Heart right ventricle (tissue), 16 donors: ENCODE measurements at regions of chr2 and their contacts with region 1.

Region 1: GRCh38 chr2:225270861-225271260 is 128.6 kb upstream of the NYAP2 start:
- DNase-seq: no peak
- ATAC-seq: no peak
- H3K4me3 ChIP-seq: no peak overlapping the region
- H3K27ac ChIP-seq: no peak overlapping the region
- H3K4me1 ChIP-seq: no peaks in the 10 kb centered on the region
- H3K27me3 ChIP-seq: no peaks in the 10 kb centered on the region
- CTCF ChIP-seq: no peak

Region 2: DNA sequence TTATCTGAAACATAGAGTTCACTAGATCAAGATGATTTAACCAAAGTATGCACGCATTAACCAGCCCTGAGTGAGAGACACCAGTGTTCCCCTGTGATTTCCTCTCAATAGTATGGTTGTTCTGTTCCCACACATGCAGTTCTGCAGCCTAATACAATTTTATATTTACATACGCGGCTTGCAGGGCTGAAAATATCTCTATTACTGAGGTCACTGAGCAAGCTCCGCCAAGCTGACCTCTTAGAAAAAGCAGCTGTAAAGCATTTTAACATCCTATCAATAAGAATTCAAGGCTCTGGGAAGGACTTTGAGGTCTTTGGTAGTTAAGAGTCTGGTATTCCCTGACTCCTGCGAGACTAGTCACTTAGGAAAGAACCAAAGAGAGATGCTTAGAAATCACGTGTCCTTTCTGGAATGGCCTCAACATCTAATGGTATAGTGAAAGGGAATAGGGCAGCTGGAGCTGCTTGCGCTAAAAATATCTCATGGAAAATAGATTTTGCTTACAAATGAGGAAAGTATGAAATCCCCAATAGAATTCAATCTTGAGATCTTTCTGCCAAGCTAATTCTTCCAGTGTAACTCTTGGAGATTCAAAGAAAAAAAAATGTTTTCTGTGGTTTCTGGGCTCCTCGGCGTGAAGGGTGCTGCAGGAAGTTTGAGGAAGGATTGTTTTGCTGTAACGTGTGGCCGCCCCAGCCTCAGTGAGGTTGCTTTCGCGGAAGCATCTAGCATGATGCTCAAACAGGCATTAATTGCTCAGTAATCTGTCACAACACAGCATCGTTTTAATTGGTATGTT is 287.8 kb before region 1 on chr2:
- intact Hi-C with region 1: no loop called
- DNase-seq: no peak
- ATAC-seq: peak; percentile 30 to 70 (median 61)
- H3K4me3 ChIP-seq: peak overlapping the region in 9 of 10 donors; percentile 7 to 46 (median 34)
- H3K27ac ChIP-seq: peak overlapping the region; percentile 23 to 72 (median 50)
- H3K4me1 ChIP-seq: peaks cover 0 to 30% (median 0%) of the 10 kb centered on the region in 9 donors
- H3K27me3 ChIP-seq: peaks cover 0 to 2% (median 0%) of the 10 kb centered on the region in 7 donors
- CTCF ChIP-seq: no peak

Region 3: DNA sequence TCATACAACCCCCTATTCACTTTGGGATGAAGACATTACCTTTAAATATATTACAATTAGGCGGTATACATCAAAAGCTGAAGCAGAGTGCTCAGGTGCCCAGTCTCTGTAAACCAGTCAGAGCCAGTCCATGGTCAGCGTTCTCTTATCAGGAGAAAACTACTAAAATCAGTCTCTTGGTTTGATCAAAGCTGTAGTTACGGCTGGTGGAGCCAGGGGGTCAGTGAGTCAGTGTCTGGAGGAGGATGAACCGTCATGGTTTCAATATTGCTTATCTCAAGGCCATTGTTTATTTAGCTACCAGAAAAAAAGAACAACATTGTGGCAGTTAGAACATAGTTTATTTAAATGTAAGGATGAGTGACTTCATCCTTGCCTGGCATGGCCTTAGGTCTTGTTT is 57.3 kb after region 1 on chr2:
- intact Hi-C with region 1: loop called in 1 of 10 experiments (anchors 2 kb)
- DNase-seq: no peak
- ATAC-seq: no peak
- H3K4me3 ChIP-seq: no peak overlapping the region
- H3K27ac ChIP-seq: no peak overlapping the region
- H3K4me1 ChIP-seq: no peaks in the 10 kb centered on the region
- H3K27me3 ChIP-seq: no peaks in the 10 kb centered on the region
- CTCF ChIP-seq: no peak